Activated CD8-positive, alpha-beta T cell treated with anti-CD3 and anti-CD28 coated beads for 36 hours (primary cell): ENCODE measurements at regions of chr20 and their contacts with region 1.

Region 1: GRCh38 chr20:2470423-2471193 is at the start of gene SNRPB:
- DNase-seq: peak; percentile 97
- ATAC-seq: peak; percentile 98
- H3K4me3 Mint-ChIP-seq: peak within 1 kb of the TSS; percentile 89
- H3K27ac Mint-ChIP-seq: peak within 1 kb of the TSS; percentile 100
- H3K4me1 Mint-ChIP-seq: peaks cover 51% of the 10 kb centered on the region
- H3K27me3 Mint-ChIP-seq: no peaks in the 10 kb centered on the region
- CTCF ChIP-seq: no peak
- total RNA-seq, gene SNRPB: 469 to 479 TPM

Region 2: DNA sequence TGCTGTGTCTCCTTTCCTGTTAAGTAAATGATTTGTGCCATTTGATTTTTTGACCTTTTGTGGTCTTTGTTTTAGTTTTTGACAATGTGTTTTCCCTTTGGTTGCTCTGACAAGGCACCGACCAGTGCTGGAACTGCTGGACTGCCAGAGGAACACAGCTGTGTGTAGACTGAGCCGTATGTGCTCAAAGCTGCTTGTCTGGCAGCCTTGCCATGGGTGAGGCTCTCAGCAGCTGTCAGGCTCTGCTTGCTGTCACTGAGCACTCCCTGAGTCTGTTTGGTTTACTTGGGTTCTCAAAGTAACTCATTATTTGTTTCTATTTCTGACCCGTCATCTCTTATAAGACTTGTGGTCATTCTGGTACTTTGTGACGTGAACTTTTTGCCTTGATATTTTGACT is 15.1 kb after region 1 on chr20:
- CTCF ChIA-PET with region 1: no interaction called
- POLR2A ChIA-PET with region 1: interaction called, 10 read pairs
- intact Hi-C with region 1: no loop called
- DNase-seq: no peak
- ATAC-seq: no peak
- H3K4me3 Mint-ChIP-seq: no peak overlapping the region
- H3K27ac Mint-ChIP-seq: no peak overlapping the region
- H3K4me1 Mint-ChIP-seq: no peaks in the 10 kb centered on the region
- H3K27me3 Mint-ChIP-seq: no peaks in the 10 kb centered on the region
- CTCF ChIP-seq: no peak

Region 3: DNA sequence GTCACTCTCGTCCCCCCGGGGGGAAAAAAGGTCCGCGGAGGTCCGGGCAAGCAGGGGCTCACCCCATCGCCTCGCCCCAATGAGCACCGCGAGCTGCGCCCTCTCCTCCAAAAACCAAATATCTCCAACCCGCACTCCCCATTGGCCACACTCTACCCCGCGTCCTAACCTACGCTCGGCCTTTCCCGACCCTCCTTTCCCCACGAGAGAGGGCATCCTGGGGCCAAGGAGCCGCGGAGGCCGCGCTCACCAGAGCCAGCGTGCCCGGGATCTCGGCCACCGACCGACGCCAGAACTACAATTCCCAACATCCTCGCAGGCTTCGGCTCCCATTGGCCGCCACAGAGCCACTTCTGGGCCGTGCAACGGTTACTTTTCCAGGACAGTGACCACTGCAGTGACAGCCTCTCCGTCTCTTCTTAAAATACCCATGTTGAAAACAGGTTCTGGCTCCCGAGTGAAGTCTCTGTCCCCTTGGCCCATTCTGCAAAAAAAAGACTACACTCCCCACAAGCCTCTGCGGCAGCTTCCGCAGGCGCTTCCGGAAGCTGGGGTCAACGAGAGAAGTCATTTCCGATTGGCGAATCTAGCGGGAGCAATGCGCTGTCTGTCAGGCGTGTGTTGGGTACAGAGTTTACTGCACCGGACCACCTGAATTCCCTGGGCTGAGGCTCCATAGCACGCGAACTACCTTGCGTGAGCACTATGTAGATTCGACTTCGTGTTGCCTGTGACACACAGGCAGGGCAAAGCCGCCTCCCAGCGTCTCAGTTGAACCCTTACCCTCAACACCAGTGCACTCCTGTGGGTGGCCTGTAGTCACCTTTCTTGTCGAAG is 38.2 kb after region 1 on chr20 and contains the start of gene ZNF343:
- CTCF ChIA-PET with region 1: no interaction called
- POLR2A ChIA-PET with region 1: interaction called, 22 read pairs
- intact Hi-C with region 1: no loop called
- DNase-seq: peak; percentile 85
- ATAC-seq: peak; percentile 95
- H3K4me3 Mint-ChIP-seq: peak within 1 kb of the TSS; percentile 96
- H3K27ac Mint-ChIP-seq: peak within 1 kb of the TSS; percentile 98
- H3K4me1 Mint-ChIP-seq: peaks cover 19% of the 10 kb centered on the region
- H3K27me3 Mint-ChIP-seq: peaks cover 8% of the 10 kb centered on the region
- CTCF ChIP-seq: no peak
- total RNA-seq, gene ZNF343: 8.5 to 9.5 TPM

Region 4: GRCh38 chr20:2651772-2652723 is 181.4 kb after region 1 on chr20 and contains the start of gene NOP56:
- CTCF ChIA-PET with region 1: interaction called, 5 read pairs
- POLR2A ChIA-PET with region 1: interaction called, 92 read pairs
- intact Hi-C with region 1: no loop called
- DNase-seq: peak; percentile 93
- ATAC-seq: peak; percentile 91
- H3K4me3 Mint-ChIP-seq: peak within 1 kb of the TSS; percentile 89
- H3K27ac Mint-ChIP-seq: peak within 1 kb of the TSS; percentile 90
- H3K4me1 Mint-ChIP-seq: peaks cover 40% of the 10 kb centered on the region
- H3K27me3 Mint-ChIP-seq: no peaks in the 10 kb centered on the region
- CTCF ChIP-seq: no peak
- total RNA-seq, gene NOP56: 587 to 596 TPM